ENCODE measurements at regions of chr7 and their contacts with region 1.

Region 1: GRCh38 chr7:104231054-104232046 is 23.5 kb upstream of the ORC5 start:
- DNase-seq: peak; percentile 16 to 85 (median 62)

Region 2: DNA sequence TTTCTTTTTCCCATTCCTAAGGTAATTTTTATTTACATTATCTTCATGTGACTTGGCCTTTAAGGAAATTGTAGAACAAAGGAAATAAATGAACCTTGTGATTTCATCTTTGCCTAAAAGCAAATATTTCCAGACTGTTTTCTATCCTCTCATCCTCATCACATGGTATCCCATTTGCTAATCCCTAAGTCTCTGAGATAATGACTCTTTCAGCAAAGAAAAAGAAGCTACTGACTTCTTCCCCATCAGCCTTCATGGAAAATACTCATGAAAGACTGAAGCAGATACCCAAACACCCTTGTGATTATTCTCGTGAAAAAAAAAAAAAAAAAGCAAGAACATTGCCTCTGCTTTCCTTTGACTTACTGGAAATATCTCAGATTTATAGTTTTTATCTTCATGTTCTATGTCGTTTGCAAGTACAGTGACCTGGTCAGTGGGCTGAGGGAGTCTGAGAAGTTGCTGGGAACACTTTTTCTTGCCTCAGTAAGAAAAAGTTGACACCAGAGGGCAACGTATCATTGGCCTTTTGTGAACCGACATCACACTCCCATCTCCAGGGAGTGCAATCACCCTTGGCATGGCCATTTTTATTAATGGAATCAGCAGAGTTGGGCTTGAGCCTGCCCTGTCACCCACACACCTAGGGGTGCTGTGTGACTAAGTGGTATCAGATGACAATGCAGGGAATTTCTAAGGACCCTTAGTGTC is 536.6 kb after region 1 on chr7:
- intact Hi-C with region 1: no loop called
- DNase-seq: peak in 26 of 42 donors; percentile 3 to 71 (median 32)

Region 3: GRCh38 chr7:104914421-104914820 is 683.1 kb after region 1 on chr7:
- intact Hi-C with region 1: loop called (anchors 10 kb)
- DNase-seq: peak in 13 of 42 donors; percentile 11 to 48 (median 20)